ENCODE measurements at regions of chr13 and their contacts with region 1.

Region 1: GRCh38 chr13:49585220-49586157 is at the start of gene RCBTB1:
- DNase-seq: peak; percentile 87 to 89
- H3K4me3 ChIP-seq: peak within 1 kb of the TSS; percentile 45 to 94 (median 92)
- H3K27ac ChIP-seq: peak within 1 kb of the TSS; percentile 95 to 97 (median 95)
- H3K4me1 ChIP-seq: peaks cover 16 to 25% of the 10 kb centered on the region in 2 donors
- H3K27me3 ChIP-seq: no peaks in the 10 kb centered on the region
- CTCF ChIP-seq: peak in 1 of 6 experiments; percentile 5
- POLR2A ChIP-seq: peak; percentile 30 to 79
- total RNA-seq, gene RCBTB1: 82.2 to 172 (median 98.0) TPM

Region 2: GRCh38 chr13:49454388-49455006 is 131.0 kb before region 1 on chr13:
- intact Hi-C with region 1: loop called (anchors 10 kb)
- DNase-seq: no peak
- H3K4me3 ChIP-seq: no peak overlapping the region
- H3K27ac ChIP-seq: no peak overlapping the region
- H3K4me1 ChIP-seq: peaks cover 7 to 22% of the 10 kb centered on the region in 2 donors
- H3K27me3 ChIP-seq: no peaks in the 10 kb centered on the region
- CTCF ChIP-seq: no peak
- POLR2A ChIP-seq: no peak

Region 3: DNA sequence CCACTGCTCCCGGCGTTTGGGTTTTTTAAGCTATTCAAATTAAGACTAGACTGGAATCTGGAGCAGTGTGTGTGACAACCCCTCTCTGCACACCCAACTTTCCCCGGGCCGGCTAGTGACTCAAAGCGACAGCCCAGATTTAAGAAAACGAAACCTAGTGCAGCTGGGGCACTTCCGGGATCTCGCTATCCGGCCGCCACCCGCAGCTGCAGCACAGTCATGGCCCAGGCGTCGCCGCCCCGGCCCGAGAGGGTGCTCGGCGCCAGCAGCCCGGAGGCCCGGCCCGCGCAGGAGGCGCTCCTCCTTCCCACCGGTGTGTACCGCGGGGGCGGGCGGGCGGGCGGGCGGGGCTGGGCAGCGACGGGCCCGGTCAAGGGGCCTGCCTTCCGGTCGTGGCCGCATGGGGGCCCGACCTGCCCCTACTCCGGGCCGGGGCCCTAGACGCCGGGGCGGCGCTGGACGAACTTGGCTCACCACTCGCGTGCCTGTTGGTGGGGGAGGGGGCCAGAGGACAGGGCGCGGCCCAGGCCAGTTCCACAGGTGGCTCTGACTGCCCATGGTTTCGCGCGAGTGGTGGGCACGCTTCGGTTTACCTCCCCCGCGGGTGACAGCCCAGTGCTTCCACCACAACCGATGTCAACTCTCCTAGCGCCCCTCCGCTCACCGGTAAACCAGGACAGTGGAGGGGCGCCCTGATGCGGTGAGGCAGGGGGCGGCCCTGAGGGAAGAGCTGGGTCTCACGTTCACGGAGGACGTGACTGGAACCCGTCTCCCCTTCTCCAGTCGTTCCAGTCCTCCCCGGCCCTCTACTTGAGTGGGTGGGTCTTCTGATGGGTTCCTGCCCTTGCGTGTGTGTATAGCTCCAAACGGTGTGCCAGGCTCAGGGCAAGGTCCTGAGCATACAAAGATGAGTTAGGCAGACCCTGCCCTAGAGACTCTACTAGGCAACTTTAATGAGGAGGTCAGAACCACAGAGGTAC is 89.4 kb before region 1 on chr13 and contains the start of gene PHF11:
- intact Hi-C with region 1: loop called (anchors 10 kb)
- DNase-seq: peak; percentile 95 to 97
- H3K4me3 ChIP-seq: peak within 1 kb of the TSS; percentile 44 to 80 (median 75)
- H3K27ac ChIP-seq: peak within 1 kb of the TSS; percentile 98 to 99 (median 98)
- H3K4me1 ChIP-seq: peaks cover 13 to 25% of the 10 kb centered on the region in 2 donors
- H3K27me3 ChIP-seq: no peaks in the 10 kb centered on the region
- CTCF ChIP-seq: peak in 3 of 6 experiments; percentile 19 to 36 (median 30)
- POLR2A ChIP-seq: peak; percentile 60 to 72
- total RNA-seq, gene PHF11: 53.9 to 71.4 (median 64.2) TPM

Measured in thyroid gland (tissue), 4 donors.